ENCODE measurements at regions of chr17 and their contacts with region 1.

Region 1: GRCh38 chr17:77068915-77069314 is 71.9 kb upstream of the SEC14L1 start:
- DNase-seq: no peak
- ATAC-seq: no peak
- H3K4me3 ChIP-seq: no peak overlapping the region
- H3K27ac ChIP-seq: no peak overlapping the region
- H3K4me1 ChIP-seq: peaks cover 0 to 4% (median 0%) of the 10 kb centered on the region in 12 donors
- H3K27me3 ChIP-seq: peaks cover 0 to 48% (median 7%) of the 10 kb centered on the region in 9 donors
- CTCF ChIP-seq: no peak
- POLR2A ChIP-seq: no peak

Region 2: GRCh38 chr17:76816590-76817135 is 252.3 kb before region 1 on chr17:
- intact Hi-C with region 1: loop called in 1 of 10 experiments (anchors 2 kb)
- DNase-seq: no peak
- ATAC-seq: peak in 2 of 4 donors; percentile 48 to 62
- H3K4me3 ChIP-seq: no peak overlapping the region
- H3K27ac ChIP-seq: no peak overlapping the region
- H3K4me1 ChIP-seq: peaks cover 0 to 5% (median 0%) of the 10 kb centered on the region in 12 donors
- H3K27me3 ChIP-seq: peaks cover 0 to 10% (median 0%) of the 10 kb centered on the region in 9 donors
- CTCF ChIP-seq: peak; percentile 18 to 60 (median 44)
- POLR2A ChIP-seq: no peak

Region 3: GRCh38 chr17:76830987-76831715 is 237.8 kb before region 1 on chr17:
- intact Hi-C with region 1: no loop called
- DNase-seq: no peak
- ATAC-seq: no peak
- H3K4me3 ChIP-seq: no peak overlapping the region
- H3K27ac ChIP-seq: no peak overlapping the region
- H3K4me1 ChIP-seq: no peaks in the 10 kb centered on the region
- H3K27me3 ChIP-seq: peaks cover 0 to 21% (median 0%) of the 10 kb centered on the region in 9 donors
- CTCF ChIP-seq: no peak
- POLR2A ChIP-seq: no peak